Activated CD4-positive, alpha-beta T cell treated with anti-CD3 and anti-CD28 coated beads for 36 hours (primary cell): ENCODE measurements at regions of chr5 and their contacts with region 1.

Region 1: DNA sequence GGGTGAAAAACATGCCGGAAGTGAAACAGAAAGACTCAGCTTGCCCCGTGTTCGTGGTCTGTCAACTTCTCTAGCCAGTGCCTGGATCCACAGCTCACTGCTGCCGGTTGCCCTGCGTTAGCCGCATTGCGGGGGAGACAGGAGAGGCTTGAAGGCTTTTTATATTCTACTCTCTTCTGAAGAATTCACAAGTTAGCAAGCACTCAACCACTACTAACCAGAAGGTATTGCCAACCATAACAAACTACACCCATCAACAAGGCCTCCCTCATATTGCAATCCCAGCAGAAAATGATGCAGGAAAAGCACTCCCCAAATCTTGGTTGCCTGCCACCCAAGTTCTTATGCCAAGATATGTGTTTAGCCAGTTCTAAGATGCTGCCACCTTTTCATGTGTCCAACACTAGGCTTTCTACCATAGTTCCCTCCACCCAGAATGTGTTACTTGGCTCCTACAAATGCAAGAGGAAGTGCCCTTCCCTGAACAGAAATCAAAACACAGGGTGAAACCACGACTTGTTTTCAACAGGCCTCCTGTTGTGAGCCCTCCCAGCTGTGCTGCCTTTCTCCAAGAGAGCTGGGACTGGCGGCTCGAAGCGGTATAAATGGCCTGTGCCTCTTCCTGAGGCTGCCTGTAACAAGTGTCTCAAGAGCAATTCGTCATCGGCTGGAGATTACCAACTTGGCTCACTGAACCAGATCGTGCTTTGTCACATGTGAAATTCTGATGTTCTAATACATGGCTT is 129.0 kb downstream of the SNX18 start:
- DNase-seq: peak; percentile 77
- ATAC-seq: peak; percentile 87
- H3K4me3 Mint-ChIP-seq: peak overlapping the region; percentile 4
- H3K27ac Mint-ChIP-seq: peak overlapping the region; percentile 77
- H3K4me1 Mint-ChIP-seq: peaks cover 46% of the 10 kb centered on the region
- H3K27me3 Mint-ChIP-seq: no peaks in the 10 kb centered on the region

Region 2: DNA sequence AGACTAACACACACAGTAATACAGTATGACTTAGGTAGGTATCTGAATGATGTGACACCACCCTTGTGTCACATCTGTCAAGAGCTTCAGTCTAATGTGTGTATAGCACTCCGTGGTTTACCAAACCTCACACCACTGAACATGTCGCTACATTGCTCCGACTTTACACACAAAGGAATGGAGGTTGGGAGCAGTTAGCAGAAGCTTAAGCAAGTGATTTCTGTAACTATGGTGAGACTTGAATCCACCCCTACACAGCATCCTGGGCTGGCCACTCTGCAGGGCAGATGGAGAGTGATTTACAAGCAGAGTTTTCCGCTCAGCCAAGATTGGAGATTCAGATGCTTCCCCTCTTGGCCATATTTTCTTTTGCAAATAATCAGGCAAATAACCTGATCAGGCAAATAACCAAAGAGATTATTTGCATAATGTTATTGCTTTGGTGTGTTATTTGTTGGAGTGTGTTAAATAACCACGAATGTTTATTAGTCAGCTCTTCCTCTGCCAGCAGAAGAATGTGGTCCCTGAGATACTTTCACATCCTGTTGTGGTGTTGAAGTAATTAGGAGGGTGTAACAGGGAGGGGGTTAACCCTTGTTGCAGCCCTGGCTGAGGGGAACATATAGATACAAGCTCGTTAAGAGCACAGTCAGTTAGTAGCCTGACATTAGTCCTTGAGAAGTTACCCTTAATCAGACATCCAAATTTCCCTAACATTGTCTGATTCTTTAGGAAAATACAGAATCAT is 36.2 kb before region 1 on chr5:
- CTCF ChIA-PET with region 1: no interaction called
- POLR2A ChIA-PET with region 1: no interaction called
- intact Hi-C with region 1: loop called in 1 of 2 experiments (anchors 2 kb)
- DNase-seq: peak; percentile 33
- ATAC-seq: peak; percentile 85
- H3K4me3 Mint-ChIP-seq: no peak overlapping the region
- H3K27ac Mint-ChIP-seq: no peak overlapping the region
- H3K4me1 Mint-ChIP-seq: peaks cover 19% of the 10 kb centered on the region
- H3K27me3 Mint-ChIP-seq: no peaks in the 10 kb centered on the region